Activated B cell treated with CpG ODN at 0.5 μM for 24 hours (primary cell): ENCODE measurements at regions of chr18 and their contacts with region 1.

Region 1: GRCh38 chr18:29259838-29260237 is 1082.9 kb upstream of the CDH2 start:
- DNase-seq: no peak
- ATAC-seq: no peak
- H3K4me3 Mint-ChIP-seq: no peak overlapping the region
- H3K27ac Mint-ChIP-seq: no peak overlapping the region
- H3K4me1 Mint-ChIP-seq: no peaks in the 10 kb centered on the region
- H3K27me3 Mint-ChIP-seq: no peaks in the 10 kb centered on the region
- CTCF ChIP-seq: no peak

Region 2: GRCh38 chr18:29154758-29155725 is 104.8 kb before region 1 on chr18:
- CTCF ChIA-PET with region 1: no interaction called
- POLR2A ChIA-PET with region 1: no interaction called
- intact Hi-C with region 1: no loop called
- DNase-seq: no peak
- ATAC-seq: no peak
- H3K4me3 Mint-ChIP-seq: no peak overlapping the region
- H3K27ac Mint-ChIP-seq: no peak overlapping the region
- H3K4me1 Mint-ChIP-seq: no peaks in the 10 kb centered on the region
- H3K27me3 Mint-ChIP-seq: no peaks in the 10 kb centered on the region
- CTCF ChIP-seq: no peak

Region 3: GRCh38 chr18:29198834-29199233 is 61.0 kb before region 1 on chr18:
- CTCF ChIA-PET with region 1: no interaction called
- POLR2A ChIA-PET with region 1: no interaction called
- intact Hi-C with region 1: loop called (anchors 10 kb)
- DNase-seq: no peak
- ATAC-seq: no peak
- H3K4me3 Mint-ChIP-seq: no peak overlapping the region
- H3K27ac Mint-ChIP-seq: no peak overlapping the region
- H3K4me1 Mint-ChIP-seq: no peaks in the 10 kb centered on the region
- H3K27me3 Mint-ChIP-seq: no peaks in the 10 kb centered on the region
- CTCF ChIP-seq: no peak